IMR-90 (cell line): ENCODE measurements at regions of chr9 and their contacts with region 1.

Region 1: GRCh38 chr9:136769710-136770191 is 5.4 kb upstream of the LCN15 start:
- DNase-seq: no peak
- ATAC-seq: peak; percentile 80
- H3K4me3 ChIP-seq: no peak overlapping the region
- H3K27ac ChIP-seq: no peak overlapping the region
- H3K4me1 ChIP-seq: no peaks in the 10 kb centered on the region
- H3K27me3 ChIP-seq: peaks cover 9% of the 10 kb centered on the region
- CTCF ChIP-seq: peak; percentile 45
- POLR2A ChIP-seq: no peak
- RAD21 ChIP-seq: peak; percentile 20; the same call in 1 of the 2 replicates

Region 2: GRCh38 chr9:136631038-136632000 is 138.4 kb before region 1 on chr9:
- CTCF ChIA-PET with region 1: no interaction called
- POLR2A ChIA-PET with region 1: no interaction called
- dilution Hi-C with region 1: no loop called
- in situ Hi-C with region 1: no loop called
- intact Hi-C with region 1: no loop called
- DNase-seq: peak; percentile 76
- ATAC-seq: peak; percentile 91
- H3K4me3 ChIP-seq: no peak overlapping the region
- H3K27ac ChIP-seq: no peak overlapping the region
- H3K4me1 ChIP-seq: no peaks in the 10 kb centered on the region
- H3K27me3 ChIP-seq: peaks cover 11% of the 10 kb centered on the region
- CTCF ChIP-seq: peak; percentile 91
- POLR2A ChIP-seq: 0 out of 2 replicates have a peak, but pooled peaks have one; percentile 30
- RAD21 ChIP-seq: peak; percentile 97

Region 3: DNA sequence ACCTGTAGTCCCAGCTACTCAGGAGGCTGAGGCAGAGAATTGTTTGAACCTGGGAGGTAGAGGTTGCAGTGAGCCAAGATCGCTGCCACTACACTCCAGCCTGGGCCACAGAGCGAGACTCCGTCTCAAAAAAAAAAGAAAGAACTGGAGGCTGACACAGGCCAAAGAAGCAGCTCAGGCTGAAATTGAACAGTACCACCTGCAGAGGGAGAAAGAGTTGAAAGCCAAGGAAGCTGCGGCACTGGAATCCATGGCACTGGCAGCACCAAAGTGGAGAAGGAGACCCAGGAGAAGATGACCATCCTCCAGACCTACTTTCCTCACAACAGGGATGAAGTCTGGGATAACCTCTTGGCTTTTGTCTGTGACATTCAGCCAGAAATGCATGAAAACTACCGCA is 10.1 kb after region 1 on chr9:
- CTCF ChIA-PET with region 1: interaction called, 3 read pairs
- POLR2A ChIA-PET with region 1: interaction called, 3 read pairs
- dilution Hi-C with region 1: no loop called
- in situ Hi-C with region 1: no loop called
- intact Hi-C with region 1: loop called (anchors 2 kb)
- DNase-seq: no peak
- ATAC-seq: no peak
- H3K4me3 ChIP-seq: no peak overlapping the region
- H3K27ac ChIP-seq: no peak overlapping the region
- H3K4me1 ChIP-seq: no peaks in the 10 kb centered on the region
- H3K27me3 ChIP-seq: peaks cover 48% of the 10 kb centered on the region
- CTCF ChIP-seq: no peak
- POLR2A ChIP-seq: no peak
- RAD21 ChIP-seq: no peak